ENCODE measurements at regions of chr2 and their contacts with region 1.

Region 1: GRCh38 chr2:201231781-201232466 is 28.4 kb upstream of the CASP8 start:
- DNase-seq: peak; percentile 72 to 95 (median 78)
- ATAC-seq: peak; percentile 67
- H3K4me3 ChIP-seq: no peak overlapping the region
- H3K27ac ChIP-seq: peak overlapping the region; percentile 71
- H3K4me1 ChIP-seq: peaks cover 4 to 10% of the 10 kb centered on the region in 2 experiments; a peak in 3 of 5 replicates
- H3K27me3 ChIP-seq: no peaks in the 10 kb centered on the region
- CTCF ChIP-seq: peak; percentile 85 to 91 (median 90)
- EP300 ChIP-seq: no peak
- POLR2A ChIP-seq: no peak; the same call in 1 of the 2 replicates
- RAD21 ChIP-seq: peak; percentile 72 to 87

Region 2: DNA sequence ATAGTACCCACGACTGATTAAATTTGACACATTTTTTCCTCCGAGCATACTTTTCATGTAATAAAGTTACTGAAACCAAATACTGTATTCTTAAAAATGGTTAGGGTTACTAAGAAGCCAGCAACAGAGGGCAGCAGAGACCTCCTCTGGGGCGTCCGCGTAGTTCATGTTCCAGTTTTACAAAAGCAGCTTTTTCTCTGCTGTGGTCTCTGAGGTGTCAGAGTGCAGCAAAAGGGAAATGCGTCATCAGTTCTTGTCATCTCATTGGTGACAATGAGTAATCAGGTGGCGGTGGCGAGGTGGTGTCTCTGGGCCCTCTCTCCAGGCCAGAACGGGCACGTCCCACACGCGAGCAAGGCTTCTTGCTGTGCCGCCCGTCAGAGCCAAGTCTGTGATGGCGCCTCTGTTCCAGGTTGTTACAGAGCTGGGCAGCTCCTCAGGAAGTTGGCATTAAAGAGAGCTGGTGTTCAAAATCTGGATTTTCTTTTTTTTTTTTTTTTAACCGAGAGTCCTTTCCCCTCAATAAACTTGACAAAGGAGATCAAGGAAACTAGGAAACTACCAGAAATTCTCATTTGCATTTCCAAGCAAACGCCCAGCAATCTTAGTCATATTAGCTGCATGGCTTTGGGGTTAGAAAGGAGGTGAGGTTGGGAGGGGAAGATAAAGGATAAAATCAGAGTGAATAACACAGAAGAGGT is 518.8 kb before region 1 on chr2:
- CTCF ChIA-PET with region 1: no interaction called
- POLR2A ChIA-PET with region 1: no interaction called
- in situ Hi-C with region 1: no loop called
- intact Hi-C with region 1: loop called (anchors 5 kb)
- DNase-seq: peak; percentile 62 to 91 (median 72)
- ATAC-seq: peak; percentile 98
- H3K4me3 ChIP-seq: no peak overlapping the region
- H3K27ac ChIP-seq: peak overlapping the region; percentile 68
- H3K4me1 ChIP-seq: peaks cover 4 to 11% of the 10 kb centered on the region in 2 experiments; a peak in 2 of 5 replicates
- H3K27me3 ChIP-seq: no peaks in the 10 kb centered on the region
- CTCF ChIP-seq: peak; percentile 73 to 90 (median 76)
- EP300 ChIP-seq: no peak
- POLR2A ChIP-seq: peak; percentile 70
- RAD21 ChIP-seq: peak; percentile 90

Region 3: DNA sequence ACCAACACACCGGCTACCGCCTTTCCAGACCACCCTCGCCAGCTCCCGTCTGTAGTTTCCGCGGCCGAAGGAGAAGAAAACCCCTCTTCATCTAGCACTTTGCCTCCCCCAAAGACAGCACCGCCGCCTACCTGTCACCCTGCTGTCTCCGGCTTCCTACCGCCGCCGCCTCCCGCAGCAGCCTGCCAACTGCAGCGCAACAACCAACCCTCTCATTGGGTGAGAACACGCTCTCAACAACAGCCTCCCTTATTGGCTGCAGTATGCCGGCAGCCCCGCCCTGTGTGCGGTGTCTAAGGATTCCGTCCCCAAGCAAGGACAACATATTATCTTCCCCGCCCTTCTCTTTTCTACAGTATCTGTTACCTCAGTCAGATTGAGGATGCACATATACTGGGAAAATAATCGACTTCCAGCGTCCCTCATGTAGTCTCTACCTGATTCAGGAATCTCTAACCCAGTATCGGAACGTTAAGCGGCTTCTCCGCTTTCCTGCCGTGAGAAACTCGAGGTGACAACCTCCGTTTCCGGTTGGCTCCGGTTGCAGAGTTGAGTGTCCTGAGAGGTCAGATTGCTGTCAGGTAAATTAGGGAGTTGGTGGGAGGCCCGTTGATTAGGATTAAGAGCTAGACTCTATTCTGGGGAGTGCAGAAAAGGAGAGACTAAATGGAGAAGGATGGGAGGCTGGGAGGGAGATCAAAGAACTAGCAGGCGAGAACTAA is 160.3 kb before region 1 on chr2 and contains the starts of genes HYCC2 and NDUFB3:
- CTCF ChIA-PET with region 1: no interaction called
- POLR2A ChIA-PET with region 1: interaction called, 3 read pairs
- in situ Hi-C with region 1: no loop called
- intact Hi-C with region 1: loop called (anchors 5 kb)
- DNase-seq: peak; percentile 94 to 98 (median 96)
- ATAC-seq: peak; percentile 92
- H3K4me3 ChIP-seq: peak within 1 kb of the TSS; percentile 83
- H3K27ac ChIP-seq: peak within 1 kb of the TSS; percentile 99
- H3K4me1 ChIP-seq: peaks cover 4 to 5% of the 10 kb centered on the region in 2 experiments; a peak in 3 of 5 replicates
- H3K27me3 ChIP-seq: no peaks in the 10 kb centered on the region
- CTCF ChIP-seq: peak; percentile 38 to 47 (median 42); a peak in 4 of 6 replicates
- EP300 ChIP-seq: 0 out of 2 replicates have a peak, but pooled peaks have one; percentile 17
- POLR2A ChIP-seq: peak; percentile 84
- RAD21 ChIP-seq: 0 out of 4 replicates have a peak, but pooled peaks of 1 of the 2 experiments have one; percentile 2
- polyA plus RNA-seq, gene HYCC2: 7.5 to 9.8 TPM
- polyA plus RNA-seq, gene NDUFB3: 679 to 786 TPM

Region 4: GRCh38 chr2:201182650-201183364 is 49.1 kb before region 1 on chr2 and contains the start of gene CASP10:
- CTCF ChIA-PET with region 1: interaction called, 5 read pairs
- POLR2A ChIA-PET with region 1: interaction called, 18 read pairs
- in situ Hi-C with region 1: loop called (anchors 5 kb)
- intact Hi-C with region 1: loop called (anchors 1 kb)
- DNase-seq: peak; percentile 70 to 88 (median 78)
- ATAC-seq: peak; percentile 90
- H3K4me3 ChIP-seq: peak within 1 kb of the TSS; percentile 58
- H3K27ac ChIP-seq: peak within 1 kb of the TSS; percentile 84
- H3K4me1 ChIP-seq: peaks cover 5 to 14% of the 10 kb centered on the region in 2 experiments; a peak in 3 of 5 replicates
- H3K27me3 ChIP-seq: no peaks in the 10 kb centered on the region
- CTCF ChIP-seq: peak; percentile 48 to 81 (median 65)
- EP300 ChIP-seq: peak; percentile 58; the same call in 1 of the 2 replicates
- POLR2A ChIP-seq: peak; percentile 82
- RAD21 ChIP-seq: peak; percentile 59 to 84
- polyA plus RNA-seq, gene CASP10: 7.1 to 7.2 TPM

Region 5: GRCh38 chr2:201257956-201258665 is 26.2 kb after region 1 on chr2:
- CTCF ChIA-PET with region 1: no interaction called
- POLR2A ChIA-PET with region 1: interaction called, 5 read pairs
- in situ Hi-C with region 1: no loop called
- intact Hi-C with region 1: loop called (anchors 1 kb)
- DNase-seq: peak; percentile 42 to 72 (median 52)
- ATAC-seq: peak; percentile 67
- H3K4me3 ChIP-seq: peak overlapping the region; percentile 50
- H3K27ac ChIP-seq: peak overlapping the region; percentile 98
- H3K4me1 ChIP-seq: peaks cover 27 to 44% of the 10 kb centered on the region in 2 experiments
- H3K27me3 ChIP-seq: no peaks in the 10 kb centered on the region
- CTCF ChIP-seq: peak in 2 of 3 experiments; percentile 28 to 41; a peak in 2 of 6 replicates
- EP300 ChIP-seq: no peak
- POLR2A ChIP-seq: peak; percentile 64
- RAD21 ChIP-seq: peak in 1 of 2 experiments; percentile 43; a peak in 3 of 4 replicates

Region 6: DNA sequence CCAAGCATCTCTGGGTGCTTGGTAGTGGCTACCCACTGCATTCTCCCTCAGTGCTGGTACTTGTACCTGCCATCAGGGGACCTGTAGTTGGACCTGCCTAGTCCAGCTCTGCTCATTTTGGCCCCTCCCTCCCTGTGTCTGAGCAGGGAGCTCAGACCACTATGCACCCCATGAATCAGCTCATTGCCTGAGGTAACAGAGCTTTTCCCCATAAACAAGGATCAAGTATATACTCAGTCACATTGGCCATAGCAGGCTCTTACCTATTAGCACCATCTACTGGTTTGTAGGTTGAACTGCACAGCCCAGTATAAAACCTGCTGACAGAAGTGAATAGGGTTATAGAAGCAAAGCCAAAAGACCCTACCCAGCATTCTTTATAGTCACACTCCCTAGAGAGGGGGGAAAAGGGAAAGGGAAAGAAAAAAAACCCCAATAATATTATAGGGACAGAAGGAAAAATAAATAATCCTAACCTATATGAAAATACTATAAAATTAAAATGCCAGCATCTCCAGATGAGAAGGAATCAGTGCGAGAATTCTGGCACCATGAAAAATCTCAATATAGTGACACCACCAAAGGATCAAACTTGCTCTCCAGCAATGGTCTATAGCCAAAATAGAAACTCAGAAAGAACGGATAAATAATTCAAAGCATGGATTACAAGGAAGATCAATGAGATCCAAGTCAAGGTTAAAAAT is 132.1 kb after region 1 on chr2:
- CTCF ChIA-PET with region 1: interaction called, 5 read pairs
- POLR2A ChIA-PET with region 1: no interaction called
- in situ Hi-C with region 1: loop called (anchors 5 kb)
- intact Hi-C with region 1: loop called (anchors 1 kb)
- DNase-seq: peak; percentile 12 to 48 (median 18)
- ATAC-seq: peak; percentile 90
- H3K4me3 ChIP-seq: no peak overlapping the region
- H3K27ac ChIP-seq: no peak overlapping the region
- H3K4me1 ChIP-seq: no peaks in the 10 kb centered on the region
- H3K27me3 ChIP-seq: no peaks in the 10 kb centered on the region
- CTCF ChIP-seq: peak; percentile 61 to 77 (median 70)
- EP300 ChIP-seq: no peak
- POLR2A ChIP-seq: no peak
- RAD21 ChIP-seq: peak; percentile 45 to 77